Activated CD8-positive, alpha-beta T cell treated with anti-CD3 and anti-CD28 coated beads for 36 hours (primary cell): ENCODE measurements at regions of chr3 and their contacts with region 1.

Region 1: DNA sequence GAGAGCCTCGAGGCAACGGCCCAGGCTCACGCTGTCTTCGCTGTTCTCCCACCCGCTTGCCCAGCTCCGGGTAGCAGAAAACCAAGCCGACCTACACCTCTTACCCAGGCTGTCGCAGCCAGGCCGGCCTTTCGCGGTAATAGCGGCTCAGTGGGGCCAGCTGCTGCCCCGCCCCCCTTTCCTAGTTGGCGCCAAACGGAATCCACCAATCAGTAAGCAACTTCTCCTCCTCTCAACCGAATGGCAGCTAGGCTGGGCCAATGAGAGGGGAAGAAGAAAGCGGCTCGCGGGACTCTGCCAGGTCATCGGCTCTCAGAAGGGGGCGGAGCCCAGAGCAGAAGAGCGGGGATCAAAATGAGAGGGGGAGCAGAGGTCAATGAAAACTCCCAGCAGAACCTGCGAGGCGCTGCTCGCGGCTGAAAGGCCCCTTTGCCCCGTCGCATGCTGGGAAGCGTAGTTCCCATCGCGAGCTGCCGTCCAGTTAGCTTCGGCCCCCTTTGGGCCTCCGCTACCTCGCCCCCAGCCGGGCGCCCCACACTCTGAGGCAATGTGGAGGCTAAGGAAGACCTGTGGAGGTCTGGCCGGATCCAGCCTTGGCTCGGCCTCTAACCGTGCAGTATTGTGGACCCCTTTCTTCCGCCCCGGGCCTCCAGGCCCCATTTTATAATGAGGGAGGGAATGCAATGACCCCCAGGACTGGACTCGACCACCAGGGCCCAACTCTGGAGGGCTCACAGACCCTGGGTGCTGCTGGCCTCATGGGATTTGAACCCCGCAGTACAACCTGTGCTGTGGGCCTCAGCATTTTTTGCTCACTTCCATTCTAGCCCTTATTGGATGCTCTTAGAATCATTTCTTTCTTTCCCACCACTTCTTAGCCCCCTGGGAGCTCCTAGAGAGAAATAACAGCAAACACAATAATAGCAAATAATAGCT is at the start of gene CDC25A:
- DNase-seq: peak; percentile 98
- ATAC-seq: peak; percentile 99
- H3K4me3 Mint-ChIP-seq: peak within 1 kb of the TSS; percentile 97
- H3K27ac Mint-ChIP-seq: peak within 1 kb of the TSS; percentile 86
- H3K4me1 Mint-ChIP-seq: peaks cover 18% of the 10 kb centered on the region
- H3K27me3 Mint-ChIP-seq: peaks cover 8% of the 10 kb centered on the region
- CTCF ChIP-seq: no peak
- total RNA-seq, gene CDC25A: 34.1 to 38.4 TPM

Region 2: GRCh38 chr3:48018841-48019240 is 169.7 kb before region 1 on chr3:
- CTCF ChIA-PET with region 1: no interaction called
- POLR2A ChIA-PET with region 1: no interaction called
- intact Hi-C with region 1: no loop called
- DNase-seq: no peak
- ATAC-seq: no peak
- H3K4me3 Mint-ChIP-seq: no peak overlapping the region
- H3K27ac Mint-ChIP-seq: no peak overlapping the region
- H3K4me1 Mint-ChIP-seq: peaks cover 46% of the 10 kb centered on the region
- H3K27me3 Mint-ChIP-seq: no peaks in the 10 kb centered on the region
- CTCF ChIP-seq: no peak

Region 3: GRCh38 chr3:48240711-48241491 is 52.4 kb after region 1 on chr3 and contains the start of gene ZNF589:
- CTCF ChIA-PET with region 1: interaction called, 5 read pairs
- POLR2A ChIA-PET with region 1: interaction called, 17 read pairs
- intact Hi-C with region 1: no loop called
- DNase-seq: peak; percentile 99
- ATAC-seq: peak; percentile 99
- H3K4me3 Mint-ChIP-seq: peak within 1 kb of the TSS; percentile 87
- H3K27ac Mint-ChIP-seq: peak within 1 kb of the TSS; percentile 94
- H3K4me1 Mint-ChIP-seq: peaks cover 24% of the 10 kb centered on the region
- H3K27me3 Mint-ChIP-seq: no peaks in the 10 kb centered on the region
- CTCF ChIP-seq: peak; percentile 19
- total RNA-seq, gene ZNF589: 30.4 to 32.8 TPM